Left ventricle myocardium inferior (tissue), 1 donor: ENCODE measurements at regions of chr7 and their contacts with region 1.

Region 1: GRCh38 chr7:94452239-94452638 is 57.4 kb upstream of the CASD1 start:
- DNase-seq: no peak
- H3K4me3 ChIP-seq: no peak overlapping the region
- H3K27ac ChIP-seq: no peak overlapping the region
- H3K4me1 ChIP-seq: peaks cover 33% of the 10 kb centered on the region
- H3K27me3 ChIP-seq: peaks cover 10% of the 10 kb centered on the region
- CTCF ChIP-seq: no peak

Region 2: GRCh38 chr7:94338921-94339371 is 113.3 kb before region 1 on chr7:
- intact Hi-C with region 1: no loop called
- DNase-seq: no peak
- H3K4me3 ChIP-seq: no peak overlapping the region
- H3K27ac ChIP-seq: no peak overlapping the region
- H3K4me1 ChIP-seq: no peaks in the 10 kb centered on the region
- H3K27me3 ChIP-seq: no peaks in the 10 kb centered on the region
- CTCF ChIP-seq: no peak

Region 3: DNA sequence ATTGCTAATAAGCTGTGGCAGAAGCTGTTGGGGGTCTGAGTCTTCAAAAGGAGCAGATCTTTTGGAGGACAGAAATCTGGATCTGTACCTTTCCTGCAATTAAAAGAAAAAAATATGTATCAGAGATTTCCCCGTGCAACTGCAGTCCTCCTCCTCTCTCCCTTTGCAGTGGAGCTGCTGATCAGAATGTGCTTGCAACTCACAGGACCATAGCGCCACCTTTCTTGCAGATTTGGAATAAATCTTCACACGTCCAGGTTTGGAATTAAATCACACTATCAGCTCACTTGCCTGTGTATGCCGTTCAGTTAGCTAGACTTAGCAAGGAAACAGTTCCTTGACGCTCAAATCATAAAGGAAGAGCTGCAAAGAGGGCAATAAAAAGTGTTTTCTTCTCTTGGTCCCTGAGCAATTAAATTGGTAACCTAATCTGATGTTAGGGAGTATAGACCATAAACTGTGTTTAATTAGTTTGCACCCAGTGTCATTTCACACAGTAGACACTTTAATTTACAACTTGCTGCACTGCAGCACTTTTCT is 794.7 kb after region 1 on chr7:
- intact Hi-C with region 1: loop called (anchors 10 kb)
- DNase-seq: no peak
- H3K4me3 ChIP-seq: no peak overlapping the region
- H3K27ac ChIP-seq: no peak overlapping the region
- H3K4me1 ChIP-seq: no peaks in the 10 kb centered on the region
- H3K27me3 ChIP-seq: no peaks in the 10 kb centered on the region
- CTCF ChIP-seq: peak; percentile 75